ENCODE measurements at regions of chr9 and their contacts with region 1.

Region 1: GRCh38 chr9:87140605-87141109 is 193.4 kb upstream of the GAS1 start:
- DNase-seq: peak; percentile 66 to 68
- ATAC-seq: peak; percentile 98 to 100
- H3K4me3 ChIP-seq: no peak overlapping the region
- H3K27ac ChIP-seq: peak overlapping the region; percentile 42 to 58 (median 56)
- H3K4me1 ChIP-seq: peaks cover 5 to 11% of the 10 kb centered on the region in 2 donors
- H3K27me3 ChIP-seq: no peaks in the 10 kb centered on the region
- CTCF ChIP-seq: no peak
- POLR2A ChIP-seq: no peak

Region 2: DNA sequence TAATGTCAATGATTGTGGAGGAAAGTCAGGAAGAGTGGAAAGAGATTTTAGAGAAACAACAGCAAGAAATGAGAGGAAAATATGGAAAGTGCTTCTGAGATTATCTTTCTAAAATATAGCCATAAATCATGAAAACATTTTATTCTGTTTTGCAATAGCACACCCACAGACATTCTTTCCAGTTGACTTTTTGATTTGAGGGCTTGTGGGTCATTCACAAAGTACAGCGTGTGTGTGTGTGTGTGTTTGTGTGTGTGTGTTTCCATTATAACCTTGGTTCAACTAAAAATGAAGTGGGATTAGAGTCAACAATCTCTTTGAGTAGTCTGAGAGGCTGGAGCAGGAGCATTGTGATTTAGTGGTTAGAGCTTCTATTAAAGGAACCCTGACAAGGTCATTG is 76.8 kb before region 1 on chr9:
- in situ Hi-C with region 1: no loop called
- intact Hi-C with region 1: no loop called
- DNase-seq: no peak
- ATAC-seq: peak in 1 of 2 donors; percentile 30
- H3K4me3 ChIP-seq: no peak overlapping the region
- H3K27ac ChIP-seq: no peak overlapping the region
- H3K4me1 ChIP-seq: peaks cover 3 to 8% of the 10 kb centered on the region in 2 donors
- H3K27me3 ChIP-seq: no peaks in the 10 kb centered on the region
- CTCF ChIP-seq: no peak
- POLR2A ChIP-seq: no peak

Region 3: DNA sequence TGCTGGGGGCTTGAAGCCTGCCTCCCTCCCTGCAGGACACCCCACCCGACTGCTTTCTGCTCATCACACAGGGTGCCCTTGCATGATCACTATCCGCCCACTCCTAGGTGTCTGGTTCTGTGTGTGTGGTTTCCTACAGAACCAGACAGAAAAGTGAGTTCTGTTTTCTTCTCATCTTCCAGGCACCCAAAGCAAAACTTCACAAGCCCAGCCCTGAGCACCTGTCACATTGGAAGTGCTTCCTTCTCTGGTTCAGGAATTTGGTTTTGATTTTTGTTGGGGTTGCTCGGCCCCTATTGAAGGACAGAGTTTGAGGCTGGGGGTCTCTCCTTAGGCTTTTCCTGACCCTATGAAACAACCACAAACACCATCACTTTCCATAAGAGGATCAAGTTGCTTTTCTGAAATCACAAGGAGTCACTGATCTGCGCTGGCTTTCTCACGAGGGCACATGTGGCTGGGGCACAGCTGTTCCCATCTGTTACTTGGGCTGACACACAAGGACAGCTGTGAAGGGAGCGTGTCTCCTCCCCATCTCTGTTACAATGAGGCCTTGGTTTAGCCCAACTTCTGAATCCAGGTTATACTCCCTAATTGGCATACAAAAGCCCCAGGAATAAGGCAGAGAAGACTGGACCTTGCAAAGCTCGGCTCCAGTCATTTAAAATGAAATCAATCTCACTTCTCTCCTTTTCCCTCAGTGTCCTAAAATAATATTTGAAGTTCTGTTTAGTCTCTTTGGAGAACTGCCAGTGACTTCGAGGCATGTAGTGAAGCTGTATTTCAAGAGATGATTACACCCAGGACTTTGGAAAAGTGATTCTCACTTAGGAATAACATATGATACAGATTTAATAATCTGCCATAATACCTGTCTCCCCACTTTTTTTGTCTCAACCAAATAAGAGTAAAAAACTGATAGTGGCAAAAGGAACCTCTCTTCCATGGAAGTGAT is 19.8 kb after region 1 on chr9:
- in situ Hi-C with region 1: no loop called
- intact Hi-C with region 1: loop called (anchors 1 kb)
- DNase-seq: peak; percentile 80 to 85
- ATAC-seq: peak; percentile 98 to 99
- H3K4me3 ChIP-seq: no peak overlapping the region
- H3K27ac ChIP-seq: peak overlapping the region; percentile 69 to 75 (median 73)
- H3K4me1 ChIP-seq: peaks cover 5 to 42% of the 10 kb centered on the region in 2 donors
- H3K27me3 ChIP-seq: no peaks in the 10 kb centered on the region
- CTCF ChIP-seq: no peak
- POLR2A ChIP-seq: no peak